ENCODE measurements at regions of chrX and their contacts with region 1.

Region 1: GRCh38 chrX:147679356-147680005 is 232.2 kb upstream of the FMR1 start:
- DNase-seq: no peak
- H3K4me3 ChIP-seq: no peak overlapping the region
- H3K27ac ChIP-seq: no peak overlapping the region
- H3K4me1 ChIP-seq: no peaks in the 10 kb centered on the region
- H3K27me3 ChIP-seq: no peaks in the 10 kb centered on the region
- CTCF ChIP-seq: no peak

Region 2: DNA sequence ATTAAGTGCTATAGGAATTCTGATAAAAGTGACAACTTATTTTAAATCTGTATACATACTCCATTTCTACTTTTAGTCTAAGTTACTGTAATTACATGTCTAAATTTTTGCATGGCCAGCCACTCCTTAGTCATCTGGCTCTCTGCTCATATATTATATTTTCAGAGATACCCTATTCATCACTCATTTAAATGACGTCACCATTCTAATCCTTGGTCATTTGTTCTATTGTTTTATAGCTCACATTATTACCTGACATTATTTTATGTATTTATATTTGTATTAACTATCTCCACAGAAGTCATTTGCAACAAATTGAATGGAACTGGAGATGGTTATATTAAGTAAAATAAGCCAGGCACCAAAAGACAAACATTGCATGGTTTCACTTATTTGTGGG is 685.3 kb before region 1 on chrX:
- CTCF ChIA-PET with region 1: no interaction called
- POLR2A ChIA-PET with region 1: interaction called, 10 read pairs
- intact Hi-C with region 1: no loop called
- DNase-seq: no peak
- H3K4me3 ChIP-seq: no peak overlapping the region
- H3K27ac ChIP-seq: no peak overlapping the region
- H3K4me1 ChIP-seq: no peaks in the 10 kb centered on the region
- H3K27me3 ChIP-seq: no peaks in the 10 kb centered on the region
- CTCF ChIP-seq: no peak

Region 3: GRCh38 chrX:147899715-147900114 is 220.2 kb after region 1 on chrX:
- CTCF ChIA-PET with region 1: no interaction called
- POLR2A ChIA-PET with region 1: no interaction called
- intact Hi-C with region 1: no loop called
- DNase-seq: peak; percentile 49
- H3K4me3 ChIP-seq: no peak overlapping the region
- H3K27ac ChIP-seq: no peak overlapping the region
- H3K4me1 ChIP-seq: no peaks in the 10 kb centered on the region
- H3K27me3 ChIP-seq: no peaks in the 10 kb centered on the region
- CTCF ChIP-seq: no peak

Measured in A673 (cell line).